ENCODE measurements at regions of chr7 and their contacts with region 1.

Region 1: GRCh38 chr7:25583621-25584020 is 355.3 kb upstream of the NPVF start:
- DNase-seq: peak in 5 of 42 donors; percentile 7 to 20 (median 13)

Region 2: DNA sequence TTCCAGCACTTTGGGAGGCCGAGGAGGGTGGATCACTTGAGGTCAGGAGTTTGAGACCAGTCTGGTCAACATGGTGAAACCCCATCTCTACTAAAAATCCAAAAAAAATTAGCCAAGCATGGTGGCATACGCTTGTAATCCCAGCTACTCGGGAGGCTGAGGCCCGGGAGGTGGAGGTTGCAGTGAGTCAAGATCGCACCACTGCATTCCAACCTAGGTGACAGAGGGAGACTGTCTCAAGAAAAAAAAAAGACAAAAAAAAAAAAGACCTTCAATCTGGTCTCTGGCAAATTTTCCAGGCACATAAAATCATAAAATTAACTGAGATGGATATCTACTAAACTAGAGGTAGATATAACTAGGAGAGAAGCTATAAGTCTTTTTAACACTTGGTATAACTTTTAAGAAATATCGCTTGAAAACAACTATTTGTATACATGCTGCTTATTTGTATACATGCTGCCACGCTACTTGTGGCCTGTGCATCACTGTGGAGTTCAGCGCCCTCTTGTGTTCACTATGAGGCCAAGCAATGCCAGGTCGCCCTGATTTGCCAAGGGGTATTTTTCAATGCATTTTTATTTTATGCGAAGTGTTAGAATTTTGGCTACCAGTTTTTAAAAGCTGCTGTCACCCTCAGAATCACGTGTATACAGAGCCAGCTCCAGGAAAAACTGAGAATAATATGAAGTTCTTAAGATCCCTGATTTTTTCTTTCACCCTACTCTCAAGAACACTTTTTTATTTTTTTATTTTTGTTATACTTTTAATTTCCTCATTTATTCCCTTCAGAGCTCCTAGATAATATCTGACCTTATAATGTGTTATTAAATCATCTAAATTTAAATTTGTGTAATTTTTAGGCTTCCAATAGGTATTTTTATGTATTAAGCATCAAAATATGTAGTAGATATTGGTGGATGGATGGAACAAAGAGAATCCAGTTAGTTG is 485.2 kb before region 1 on chr7:
- intact Hi-C with region 1: no loop called
- DNase-seq: peak; percentile 17 to 81 (median 59)

Region 3: DNA sequence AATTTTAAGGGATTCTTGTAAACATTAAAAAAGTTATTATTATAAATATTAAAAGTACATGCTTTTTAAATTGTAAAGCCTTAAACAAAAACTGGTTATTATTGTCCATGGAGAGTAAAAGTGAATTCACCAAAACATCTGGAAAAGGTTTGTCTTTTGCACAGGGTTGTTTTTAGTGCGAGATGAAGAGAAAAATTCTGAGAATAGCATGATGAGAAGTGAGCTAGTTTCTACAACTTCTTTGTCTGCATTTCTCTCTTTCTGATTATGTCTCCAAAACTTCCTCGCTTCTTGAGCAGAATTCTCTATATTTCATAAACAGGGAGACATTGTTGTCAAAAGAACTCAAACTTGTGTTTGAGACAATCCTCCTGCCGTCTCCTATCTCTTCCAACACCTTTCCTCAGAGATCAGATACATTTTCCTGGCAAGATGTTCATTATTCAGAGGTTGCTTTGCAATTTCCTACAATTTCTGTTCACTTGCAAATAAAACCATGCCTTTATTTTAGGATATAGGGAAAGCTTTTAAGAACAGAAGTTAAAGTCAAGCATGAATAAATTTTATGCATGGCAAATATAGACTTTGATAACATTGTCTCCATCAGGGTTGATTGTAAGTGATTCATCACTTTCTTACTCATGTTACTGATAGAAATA is 16.8 kb after region 1 on chr7:
- intact Hi-C with region 1: loop called (anchors 2 kb)
- DNase-seq: no peak

Region 4: GRCh38 chr7:25851332-25852210 is 267.9 kb after region 1 on chr7:
- intact Hi-C with region 1: no loop called
- DNase-seq: peak; percentile 66 to 95 (median 87)

Measured in head of caudate nucleus (tissue), 42 donors.